SK-N-SH (cell line): ENCODE measurements at regions of chr22 and their contacts with region 1.

Region 1: GRCh38 chr22:18077639-18078328 is at the start of gene PEX26:
- DNase-seq: peak; percentile 95
- H3K4me3 ChIP-seq: peak within 1 kb of the TSS; percentile 90 to 96
- H3K27ac ChIP-seq: peak within 1 kb of the TSS; percentile 58 to 80
- H3K4me1 ChIP-seq: peaks cover 14 to 23% of the 10 kb centered on the region in 2 experiments
- H3K27me3 ChIP-seq: no peaks in the 10 kb centered on the region
- CTCF ChIP-seq: no peak
- EP300 ChIP-seq: no peak
- RAD21 ChIP-seq: no peak
- polyA plus RNA-seq, gene PEX26: 13.0 and 17.5 TPM in 2 replicates

Region 2: DNA sequence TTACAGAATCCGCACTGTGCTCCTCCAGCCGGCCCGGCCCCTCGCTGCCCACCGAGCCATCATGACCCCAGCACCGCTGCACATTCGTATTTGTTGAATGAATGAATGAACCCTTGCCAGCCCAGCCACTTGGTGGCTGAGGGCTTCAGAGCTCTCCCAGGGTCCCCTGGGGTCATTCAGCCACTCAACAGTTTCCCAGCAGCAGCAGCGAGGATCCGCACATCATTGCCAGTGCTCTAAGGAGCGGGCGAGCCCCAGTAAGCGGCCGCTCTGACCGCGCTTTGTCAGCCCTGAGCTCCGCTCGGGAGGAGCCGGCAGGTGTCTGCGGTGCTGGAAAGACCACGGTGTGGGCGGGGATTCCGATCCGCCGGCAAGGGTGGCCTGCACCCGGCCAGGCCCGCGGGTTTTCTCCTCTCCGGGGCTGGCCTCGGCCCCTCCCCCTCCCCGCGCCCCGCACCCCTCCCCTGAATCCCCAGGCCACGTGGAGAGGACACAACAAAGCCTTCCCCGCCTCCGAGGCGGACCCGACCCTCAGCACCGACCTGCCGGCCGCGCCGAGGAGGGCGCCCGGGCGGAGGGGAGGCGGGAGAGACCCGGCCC is 304.1 kb before region 1 on chr22:
- CTCF ChIA-PET with region 1: interaction called, 10 read pairs
- POLR2A ChIA-PET with region 1: interaction called, 5 read pairs
- DNase-seq: peak; percentile 93
- H3K4me3 ChIP-seq: peak overlapping the region; percentile 73 to 81
- H3K27ac ChIP-seq: peak overlapping the region in 1 of 2 experiments; percentile 79; a peak in 2 of 4 replicates
- H3K4me1 ChIP-seq: peaks cover 12 to 35% of the 10 kb centered on the region in 2 experiments; a peak in 2 of 4 replicates
- H3K27me3 ChIP-seq: no peaks in the 10 kb centered on the region
- CTCF ChIP-seq: no peak
- EP300 ChIP-seq: no peak
- RAD21 ChIP-seq: no peak

Region 3: GRCh38 chr22:17842386-17842785 is 235.4 kb before region 1 on chr22:
- CTCF ChIA-PET with region 1: interaction called, 29 read pairs
- POLR2A ChIA-PET with region 1: no interaction called
- DNase-seq: no peak
- H3K4me3 ChIP-seq: no peak overlapping the region
- H3K27ac ChIP-seq: no peak overlapping the region
- H3K4me1 ChIP-seq: peaks cover 0 to 34% of the 10 kb centered on the region in 2 experiments; a peak in 1 of 4 replicates
- H3K27me3 ChIP-seq: no peaks in the 10 kb centered on the region
- CTCF ChIP-seq: no peak
- EP300 ChIP-seq: no peak
- RAD21 ChIP-seq: no peak

Region 4: GRCh38 chr22:17903564-17904295 is 174.1 kb before region 1 on chr22:
- CTCF ChIA-PET with region 1: interaction called, 58 read pairs
- POLR2A ChIA-PET with region 1: interaction called, 3 read pairs
- DNase-seq: peak; percentile 49
- H3K4me3 ChIP-seq: no peak overlapping the region
- H3K27ac ChIP-seq: peak overlapping the region in 1 of 2 experiments; percentile 24; a peak in 1 of 4 replicates
- H3K4me1 ChIP-seq: peaks cover 0 to 20% of the 10 kb centered on the region in 2 experiments; a peak in 1 of 4 replicates
- H3K27me3 ChIP-seq: no peaks in the 10 kb centered on the region
- CTCF ChIP-seq: no peak
- EP300 ChIP-seq: no peak
- RAD21 ChIP-seq: peak; percentile 38; the same call in 1 of the 2 replicates

Region 5: DNA sequence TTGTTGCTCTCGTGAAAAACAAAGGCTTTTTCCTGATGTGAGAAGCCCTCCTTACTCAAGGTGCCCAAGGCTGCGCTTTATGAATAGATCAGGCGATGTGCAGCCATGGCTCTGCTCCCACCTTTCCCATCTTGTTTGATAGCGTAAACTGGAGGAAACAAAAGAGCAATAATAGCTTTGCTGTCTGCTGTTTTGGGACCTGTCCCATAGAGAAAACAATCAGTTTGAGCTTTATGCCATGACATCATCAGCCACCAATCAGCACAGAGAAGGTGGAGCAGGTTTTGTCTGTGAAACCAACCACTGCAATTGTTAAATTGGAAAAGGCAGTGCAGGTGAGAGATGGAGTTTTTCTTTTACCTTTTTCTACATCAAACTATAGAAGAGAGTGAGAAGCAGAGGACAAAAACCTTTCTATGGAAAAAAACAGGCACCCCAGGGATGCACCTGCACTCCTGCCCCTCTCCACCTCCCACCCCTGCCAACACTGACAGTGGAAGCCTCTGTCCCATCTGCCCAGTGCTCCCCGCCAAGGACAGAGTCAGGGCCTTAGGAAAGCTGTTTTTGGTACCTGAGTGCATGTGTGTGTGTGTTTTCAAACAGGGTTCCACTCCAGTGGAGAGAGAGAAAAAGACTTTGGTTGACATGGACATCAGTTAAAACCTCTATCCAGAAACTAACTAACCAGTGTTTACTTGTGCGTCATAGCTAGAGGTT is 134.1 kb before region 1 on chr22:
- CTCF ChIA-PET with region 1: interaction called, 11 read pairs
- POLR2A ChIA-PET with region 1: no interaction called
- DNase-seq: no peak
- H3K4me3 ChIP-seq: no peak overlapping the region
- H3K27ac ChIP-seq: peak overlapping the region in 1 of 2 experiments; percentile 78; a peak in 2 of 4 replicates
- H3K4me1 ChIP-seq: peaks cover 0 to 85% of the 10 kb centered on the region in 2 experiments; a peak in 2 of 4 replicates
- H3K27me3 ChIP-seq: no peaks in the 10 kb centered on the region
- CTCF ChIP-seq: no peak
- EP300 ChIP-seq: no peak
- RAD21 ChIP-seq: no peak

Region 6: GRCh38 chr22:18057568-18058209 is 20.1 kb before region 1 on chr22:
- CTCF ChIA-PET with region 1: interaction called, 32 read pairs
- POLR2A ChIA-PET with region 1: interaction called, 5 read pairs
- DNase-seq: no peak
- H3K4me3 ChIP-seq: no peak overlapping the region
- H3K27ac ChIP-seq: peak overlapping the region; percentile 29 to 92; a peak in 3 of 4 replicates
- H3K4me1 ChIP-seq: peaks cover 15 to 33% of the 10 kb centered on the region in 2 experiments; a peak in 3 of 4 replicates
- H3K27me3 ChIP-seq: no peaks in the 10 kb centered on the region
- CTCF ChIP-seq: no peak
- EP300 ChIP-seq: peak in 1 of 2 experiments; percentile 68; a peak in 1 of 4 replicates
- RAD21 ChIP-seq: no peak

Region 7: DNA sequence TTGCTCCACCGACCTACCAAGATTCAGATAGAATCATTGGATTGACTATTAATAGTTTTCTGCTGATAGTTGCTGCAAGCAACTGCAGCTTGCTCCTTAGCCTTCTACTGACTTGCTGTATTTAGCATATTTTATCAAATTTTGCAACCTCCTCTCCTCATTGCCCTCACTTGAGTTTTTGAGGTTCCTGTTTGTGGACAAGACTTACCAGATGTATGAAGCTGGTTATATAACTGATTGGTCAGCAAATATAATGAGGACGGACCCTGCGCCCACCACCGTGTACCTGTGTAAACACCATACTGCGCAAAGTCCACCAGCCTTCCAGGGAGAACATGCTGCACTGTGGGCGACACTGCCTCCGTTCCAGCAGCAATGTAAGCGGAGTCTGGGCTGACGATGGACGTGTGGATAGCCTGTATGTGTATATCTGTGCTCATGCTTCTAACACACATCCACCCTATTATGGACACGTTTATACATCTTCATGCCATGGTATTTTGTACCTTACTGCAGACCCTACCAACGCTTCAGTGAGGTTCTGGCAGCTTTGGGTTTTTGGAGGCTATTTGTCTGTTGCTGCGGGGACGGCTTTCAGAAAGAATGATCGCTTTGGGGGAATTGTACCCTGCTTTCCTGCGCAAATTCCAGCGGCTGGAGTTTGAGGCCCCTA is 70.6 kb after region 1 on chr22:
- CTCF ChIA-PET with region 1: no interaction called
- POLR2A ChIA-PET with region 1: no interaction called
- DNase-seq: no peak
- H3K4me3 ChIP-seq: no peak overlapping the region
- H3K27ac ChIP-seq: no peak overlapping the region
- H3K4me1 ChIP-seq: no peaks in the 10 kb centered on the region
- H3K27me3 ChIP-seq: no peaks in the 10 kb centered on the region
- CTCF ChIP-seq: no peak
- EP300 ChIP-seq: no peak
- RAD21 ChIP-seq: no peak